Naive thymus-derived CD8-positive, alpha-beta T cell (primary cell): ENCODE measurements at regions of chr17 and their contacts with region 1.

Region 1: GRCh38 chr17:76671123-76671911 is 27.8 kb upstream of the ST6GALNAC1 start:
- DNase-seq: peak; percentile 92 to 100 (median 98)
- ATAC-seq: peak; percentile 95 to 98
- H3K4me3 Mint-ChIP-seq: peak overlapping the region; percentile 86 to 97 (median 93)
- H3K27ac Mint-ChIP-seq: peak overlapping the region; percentile 95 to 99 (median 98)
- H3K4me1 Mint-ChIP-seq: peaks cover 20 to 54% (median 42%) of the 10 kb centered on the region in 4 donors
- H3K27me3 Mint-ChIP-seq: peaks cover 0 to 1% (median 0%) of the 10 kb centered on the region in 5 donors

Region 2: DNA sequence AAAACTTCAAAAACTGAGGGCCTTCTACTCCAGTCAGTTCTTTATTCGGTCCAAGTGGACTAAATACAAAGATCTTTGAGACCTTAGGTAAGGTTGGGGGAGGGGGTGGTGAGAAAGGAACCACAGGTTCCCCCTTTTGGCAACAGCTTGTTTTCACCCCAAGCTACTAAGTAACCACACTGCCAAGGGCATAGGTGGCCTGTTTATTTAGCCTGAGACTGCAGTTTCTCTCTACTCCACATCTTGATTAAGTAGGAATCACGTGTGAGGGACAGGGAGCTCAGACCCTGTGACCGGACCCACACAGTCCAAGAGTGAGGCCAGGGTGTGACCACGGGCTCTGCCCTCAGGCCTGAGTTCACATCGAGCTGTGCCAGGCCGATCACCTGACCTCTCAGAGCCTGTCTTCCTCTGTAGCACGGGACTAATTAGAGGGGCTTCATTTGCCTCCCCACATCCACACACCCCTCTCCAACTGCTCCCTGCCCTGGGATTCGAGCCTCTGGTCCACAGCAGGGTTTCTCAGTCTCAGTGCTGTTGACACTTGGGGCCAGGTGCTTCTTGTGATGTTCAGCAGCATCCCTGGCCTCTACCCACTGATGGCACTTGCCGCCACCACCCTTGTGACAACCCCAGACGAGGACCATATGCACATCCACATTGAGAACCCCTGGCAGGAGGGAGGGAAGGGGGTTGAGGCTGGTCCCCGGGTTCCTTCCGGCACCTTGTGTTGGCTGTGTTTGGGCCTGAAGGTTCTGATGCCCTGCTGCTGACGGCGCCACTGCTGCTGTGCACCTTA is 103.5 kb before region 1 on chr17:
- POLR2A ChIA-PET with region 1: no interaction called
- DNase-seq: peak in 2 of 10 donors; percentile 17 to 19
- ATAC-seq: peak; percentile 46 to 65
- H3K4me3 Mint-ChIP-seq: peak overlapping the region in 5 of 10 donors; percentile 40 to 64 (median 41)
- H3K27ac Mint-ChIP-seq: peak overlapping the region; percentile 37 to 82 (median 70)
- H3K4me1 Mint-ChIP-seq: peaks cover 22 to 43% (median 40%) of the 10 kb centered on the region in 4 donors
- H3K27me3 Mint-ChIP-seq: peaks cover 0 to 3% (median 0%) of the 10 kb centered on the region in 5 donors

Region 3: DNA sequence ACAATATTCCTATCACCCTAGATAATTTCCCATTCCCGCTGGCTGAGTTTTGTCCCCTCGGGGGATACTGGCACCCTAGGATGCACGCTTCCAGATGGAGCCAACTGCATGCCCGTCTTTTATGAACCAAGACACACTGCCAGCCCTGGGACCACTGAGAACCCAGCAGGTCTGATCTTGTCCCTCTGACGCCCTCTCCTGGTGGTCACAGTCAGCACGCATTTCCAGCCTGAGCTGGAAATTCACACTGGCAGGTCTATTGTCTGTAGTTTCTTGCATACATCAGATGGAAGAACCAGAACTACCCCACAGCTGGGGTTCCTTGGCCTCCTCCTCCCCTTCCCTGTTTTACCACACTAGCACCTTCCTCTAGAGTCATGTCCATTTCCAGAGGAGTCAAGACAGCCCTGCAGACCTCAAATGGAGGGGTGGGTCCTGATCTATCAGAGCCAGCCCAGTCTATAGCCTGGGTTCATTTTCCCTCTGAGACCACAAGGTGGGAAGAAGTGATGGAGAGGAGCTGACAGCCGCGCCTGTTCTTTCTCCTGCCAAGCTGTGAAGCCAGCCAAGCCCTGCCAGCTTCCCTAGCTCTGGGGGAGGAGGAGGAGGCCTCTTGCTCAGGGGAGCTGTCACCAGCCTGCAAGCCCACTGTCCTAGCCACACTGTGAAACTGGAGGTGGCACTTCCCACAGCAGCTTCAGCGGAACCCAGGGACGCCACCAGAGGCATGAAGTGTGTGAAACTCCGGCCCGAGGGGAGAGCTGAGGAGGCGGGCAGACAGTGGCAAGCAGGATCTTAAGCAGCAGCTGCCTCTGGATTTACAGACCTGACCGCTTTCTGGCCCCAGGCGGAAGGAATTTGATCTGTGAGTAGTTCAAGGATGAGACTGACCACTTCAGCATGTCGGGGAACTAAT is 10.2 kb after region 1 on chr17:
- POLR2A ChIA-PET with region 1: interaction called, 26 read pairs
- DNase-seq: peak; percentile 61 to 88 (median 75)
- ATAC-seq: peak; percentile 76 to 80
- H3K4me3 Mint-ChIP-seq: peak overlapping the region in 3 of 10 donors; percentile 2 to 78 (median 75)
- H3K27ac Mint-ChIP-seq: peak overlapping the region in 6 of 10 donors; percentile 16 to 86 (median 73)
- H3K4me1 Mint-ChIP-seq: peaks cover 5 to 15% (median 11%) of the 10 kb centered on the region in 4 donors
- H3K27me3 Mint-ChIP-seq: no peaks in the 10 kb centered on the region